Panc1 (cell line): ENCODE measurements at regions of chr11 and their contacts with region 1.

Region 1: DNA sequence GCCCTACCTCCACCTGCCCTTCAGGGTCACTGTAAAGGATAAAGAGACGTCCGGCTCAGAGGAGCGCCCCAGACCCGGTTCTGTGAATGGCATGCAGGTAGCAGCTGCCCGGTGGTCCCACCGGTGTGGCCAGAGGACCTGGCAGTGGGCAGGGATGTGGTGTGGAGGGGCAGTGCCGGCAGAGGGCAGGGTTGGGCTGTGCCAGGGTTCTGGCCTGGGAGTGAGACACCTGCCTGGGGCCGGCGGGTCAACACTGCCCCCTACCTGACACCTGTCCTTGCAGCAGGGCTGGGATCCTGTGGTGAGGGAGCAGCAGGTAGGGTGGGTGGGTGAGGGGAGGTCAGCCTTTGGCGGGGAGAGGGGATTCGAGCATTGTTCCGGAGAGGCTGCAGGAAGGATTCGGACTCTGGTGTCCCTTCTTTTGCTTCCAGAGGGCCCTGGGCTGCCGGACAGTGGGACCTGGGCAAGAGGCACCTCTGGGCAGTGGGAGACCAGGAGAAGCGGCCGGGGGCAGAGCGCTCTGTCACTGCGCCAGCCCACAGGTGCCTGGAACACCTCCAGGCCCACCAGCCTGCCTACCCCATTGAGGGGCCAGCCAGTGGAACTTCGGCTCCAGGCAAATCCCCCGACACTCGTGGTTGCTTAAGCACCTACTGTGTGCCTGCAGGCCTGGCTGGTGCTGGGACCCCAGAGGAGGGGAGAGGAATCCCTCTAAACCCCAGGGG is 1.6 kb upstream of the PHLDA2 start:
- DNase-seq: peak; percentile 82
- ATAC-seq: peak; percentile 67
- H3K4me3 ChIP-seq: peak overlapping the region; percentile 73 to 84
- H3K27ac ChIP-seq: peak overlapping the region; percentile 97
- H3K4me1 ChIP-seq: peaks cover 57% of the 10 kb centered on the region
- H3K27me3 ChIP-seq: no peaks in the 10 kb centered on the region
- CTCF ChIP-seq: peak; percentile 100

Region 2: DNA sequence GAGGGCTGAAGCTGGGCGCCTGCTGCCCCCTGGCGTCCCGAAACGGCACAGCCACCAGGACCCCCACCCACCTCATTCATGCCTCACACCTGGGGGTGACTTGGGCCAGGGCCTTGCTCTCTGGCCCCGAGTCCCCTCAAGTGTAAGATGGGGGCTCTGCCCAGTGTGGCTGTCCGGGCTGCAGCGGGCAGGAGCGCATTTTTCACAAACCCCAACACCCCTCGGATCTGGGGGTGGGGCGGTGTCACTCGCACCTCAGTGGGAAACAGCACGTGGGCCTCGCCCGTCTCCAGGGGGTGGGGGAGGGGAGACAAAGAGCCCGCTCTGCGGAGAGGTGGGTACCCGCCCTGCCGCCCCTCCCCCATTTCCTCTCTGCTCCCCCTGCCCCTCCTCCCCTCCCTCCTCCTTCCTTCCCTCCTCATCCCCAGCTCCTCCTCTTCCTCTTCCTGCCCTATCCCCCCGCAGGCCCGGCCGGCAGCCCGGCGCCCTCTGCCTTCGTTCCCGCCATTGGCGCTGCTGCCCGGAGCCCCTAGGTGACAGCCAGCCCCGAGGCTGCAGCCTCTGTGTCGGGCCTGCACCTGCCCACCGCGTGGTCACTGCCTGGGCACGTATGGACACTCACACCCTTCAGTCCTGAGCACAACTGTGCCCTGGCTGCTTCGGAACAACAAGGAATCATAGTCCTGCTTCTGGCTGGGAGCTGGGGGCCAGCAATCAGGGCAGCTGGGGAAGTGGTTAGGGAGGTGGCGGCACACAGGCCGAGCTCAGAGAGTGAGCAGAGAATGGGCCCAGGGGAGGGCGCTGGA is 38.4 kb before region 1 on chr11:
- CTCF ChIA-PET with region 1: interaction called, 7 read pairs
- POLR2A ChIA-PET with region 1: interaction called, 12 read pairs
- in situ Hi-C with region 1: no loop called
- intact Hi-C with region 1: no loop called
- DNase-seq: no peak
- ATAC-seq: peak; percentile 69
- H3K4me3 ChIP-seq: peak overlapping the region; percentile 37 to 54
- H3K27ac ChIP-seq: peak overlapping the region; percentile 83
- H3K4me1 ChIP-seq: peaks cover 20% of the 10 kb centered on the region
- H3K27me3 ChIP-seq: no peaks in the 10 kb centered on the region
- CTCF ChIP-seq: peak; percentile 100

Region 3: DNA sequence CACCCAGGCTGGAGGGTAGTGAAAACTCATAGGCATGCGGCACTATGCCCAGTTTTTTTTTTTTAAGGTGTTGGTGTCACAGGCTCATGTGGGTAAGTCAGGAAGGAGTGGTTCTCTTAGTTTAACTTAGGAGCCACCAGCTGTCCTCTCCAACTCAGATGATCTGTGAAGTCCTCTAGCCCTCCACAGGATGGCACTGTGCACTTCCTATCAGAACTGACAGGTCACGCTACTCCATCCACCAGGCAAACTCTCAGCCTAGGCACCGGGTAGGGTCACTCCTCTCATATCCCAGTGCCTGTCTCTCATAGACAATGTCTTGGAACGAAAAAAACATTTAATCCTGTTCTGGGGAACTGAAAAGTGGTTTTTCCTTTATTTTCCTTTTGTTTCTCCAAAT is 44.7 kb after region 1 on chr11:
- CTCF ChIA-PET with region 1: no interaction called
- POLR2A ChIA-PET with region 1: interaction called, 20 read pairs
- in situ Hi-C with region 1: no loop called
- intact Hi-C with region 1: no loop called
- DNase-seq: no peak
- ATAC-seq: peak; percentile 92
- H3K4me3 ChIP-seq: no peak overlapping the region
- H3K27ac ChIP-seq: no peak overlapping the region
- H3K4me1 ChIP-seq: peaks cover 4% of the 10 kb centered on the region; the same call in 1 of the 2 replicates
- H3K27me3 ChIP-seq: no peaks in the 10 kb centered on the region
- CTCF ChIP-seq: peak; percentile 83

Region 4: GRCh38 chr11:3220521-3221407 is 289.9 kb after region 1 on chr11:
- CTCF ChIA-PET with region 1: no interaction called
- POLR2A ChIA-PET with region 1: no interaction called
- in situ Hi-C with region 1: no loop called
- intact Hi-C with region 1: loop called (anchors 10 kb)
- DNase-seq: no peak
- ATAC-seq: no peak
- H3K4me3 ChIP-seq: no peak overlapping the region
- H3K27ac ChIP-seq: no peak overlapping the region
- H3K4me1 ChIP-seq: peaks cover 7% of the 10 kb centered on the region
- H3K27me3 ChIP-seq: peaks cover 14% of the 10 kb centered on the region
- CTCF ChIP-seq: no peak